ENCODE measurements at regions of chr6 and their contacts with region 1.

Region 1: DNA sequence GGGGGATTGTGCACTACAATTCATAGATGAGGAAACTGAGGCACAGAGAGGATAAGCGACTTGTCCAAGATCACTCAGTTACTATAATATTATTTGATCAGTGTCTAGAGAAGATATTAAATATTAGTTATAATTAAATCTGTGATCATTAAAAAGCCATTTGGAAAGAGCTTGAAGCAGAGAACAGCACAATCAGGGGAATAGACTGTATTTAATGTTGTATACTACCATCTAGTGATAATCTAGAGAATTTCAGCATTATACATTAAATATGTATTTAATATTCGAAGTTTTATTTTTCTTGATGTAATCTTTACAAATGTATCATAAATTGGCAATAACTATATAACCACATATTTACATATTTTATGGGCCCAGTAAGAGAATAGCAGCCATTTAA is 20.1 kb upstream of the MTCL3 start:
- DNase-seq: peak in 1 of 35 experiments; percentile 32
- ATAC-seq: peak in 1 of 4 experiments; percentile 62
- H3K4me3 ChIP-seq: no peak overlapping the region
- H3K4me3 Mint-ChIP-seq: no peak overlapping the region
- H3K27ac ChIP-seq: no peak overlapping the region
- H3K27ac Mint-ChIP-seq: no peak overlapping the region
- H3K4me1 ChIP-seq: no peaks in the 10 kb centered on the region
- H3K4me1 Mint-ChIP-seq: no peaks in the 10 kb centered on the region
- H3K27me3 ChIP-seq: no peaks in the 10 kb centered on the region
- H3K27me3 Mint-ChIP-seq: peaks cover 6 to 15% of the 10 kb centered on the region in 2 donors

Region 2: DNA sequence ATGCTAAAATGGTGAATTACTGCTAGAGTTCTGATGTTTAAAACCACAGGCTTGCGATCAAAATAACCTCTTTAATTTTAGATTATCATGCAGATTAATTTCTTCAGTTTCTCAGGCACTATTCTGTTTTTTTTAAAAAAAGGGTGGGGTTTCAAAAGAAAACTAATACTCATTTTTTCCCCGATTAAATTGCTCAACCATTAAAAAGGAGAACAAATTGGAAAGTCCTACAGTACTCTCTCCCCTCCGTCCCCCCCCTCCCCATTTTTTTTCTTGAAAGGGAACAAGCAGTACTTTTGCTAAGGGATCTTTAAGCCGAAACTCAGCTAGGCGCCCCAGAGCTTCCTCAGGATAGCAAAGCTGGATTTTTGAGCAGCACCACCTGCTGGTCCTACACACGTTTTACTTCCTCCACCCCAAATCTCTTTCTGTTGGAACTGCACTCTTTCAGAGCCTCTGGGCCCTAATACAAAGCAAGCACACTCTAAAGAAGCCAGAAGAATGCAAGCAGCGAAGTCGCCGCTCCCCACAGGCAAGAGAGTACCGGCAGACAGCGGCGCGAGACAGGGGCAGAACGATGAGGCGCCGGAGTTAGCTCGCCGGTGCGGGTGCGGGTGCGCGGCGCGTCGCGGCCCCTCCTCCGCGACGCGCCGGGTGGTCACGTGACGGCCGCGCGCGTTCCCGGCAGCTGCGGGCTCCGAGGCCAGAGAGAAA is 272.9 kb before region 1 on chr6 and contains the start of gene RNF146:
- CTCF ChIA-PET with region 1: no interaction called
- POLR2A ChIA-PET with region 1: interaction called in 1 of 2 experiments, 11 read pairs
- DNase-seq: peak; percentile 41 to 81 (median 63)
- ATAC-seq: peak; percentile 83 to 86 (median 84)
- H3K4me3 ChIP-seq: peak within 1 kb of the TSS; percentile 95 to 96
- H3K4me3 Mint-ChIP-seq: peak within 1 kb of the TSS; percentile 92 to 100 (median 93)
- H3K27ac ChIP-seq: peak within 1 kb of the TSS; percentile 97
- H3K27ac Mint-ChIP-seq: peak within 1 kb of the TSS; percentile 99 to 100
- H3K4me1 ChIP-seq: peaks cover 0 to 16% of the 10 kb centered on the region in 2 experiments
- H3K4me1 Mint-ChIP-seq: peaks cover 33 to 50% (median 41%) of the 10 kb centered on the region in 3 donors
- H3K27me3 ChIP-seq: no peaks in the 10 kb centered on the region
- H3K27me3 Mint-ChIP-seq: no peaks in the 10 kb centered on the region
- total RNA-seq, gene RNF146: 15.6 to 32.2 (median 31.3) TPM

Region 3: DNA sequence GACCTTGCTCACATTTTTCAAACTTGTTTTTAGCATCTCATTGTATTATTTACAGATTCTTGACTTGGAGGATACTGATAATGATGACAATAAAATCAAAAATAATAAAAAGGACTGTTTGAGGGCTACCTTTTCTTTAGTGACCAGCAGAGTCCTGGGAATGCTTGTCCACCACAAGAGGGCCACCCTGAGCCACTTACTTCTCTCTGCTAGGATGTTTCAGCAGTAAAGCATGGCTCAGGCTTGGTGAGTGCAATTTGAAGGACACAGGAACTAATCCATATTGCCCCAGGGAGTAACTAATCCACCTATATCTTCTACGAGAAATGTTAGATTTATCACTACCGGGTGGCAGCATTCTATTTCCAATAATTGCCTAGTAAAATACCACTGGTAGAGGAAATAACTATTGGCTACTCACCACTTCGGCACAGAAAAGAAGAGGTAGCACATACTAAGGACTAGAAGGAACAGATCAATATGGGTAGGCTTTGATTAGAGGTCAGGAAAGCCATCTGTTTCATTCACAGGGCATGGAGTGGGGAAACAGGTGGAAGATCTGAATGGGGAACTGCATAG is 74.3 kb before region 1 on chr6:
- CTCF ChIA-PET with region 1: interaction called, 12 to 17 read pairs
- POLR2A ChIA-PET with region 1: interaction called in 1 of 2 experiments, 3 read pairs
- DNase-seq: peak in 32 of 35 experiments; percentile 3 to 73 (median 40)
- ATAC-seq: peak; percentile 46 to 67 (median 58)
- H3K4me3 ChIP-seq: no peak overlapping the region
- H3K4me3 Mint-ChIP-seq: no peak overlapping the region
- H3K27ac ChIP-seq: no peak overlapping the region
- H3K27ac Mint-ChIP-seq: no peak overlapping the region
- H3K4me1 ChIP-seq: peaks cover 0 to 5% of the 10 kb centered on the region in 2 experiments
- H3K4me1 Mint-ChIP-seq: peaks cover 0 to 4% (median 0%) of the 10 kb centered on the region in 3 donors
- H3K27me3 ChIP-seq: no peaks in the 10 kb centered on the region
- H3K27me3 Mint-ChIP-seq: no peaks in the 10 kb centered on the region

Region 4: GRCh38 chr6:127618729-127619128 is 79.5 kb after region 1 on chr6:
- CTCF ChIA-PET with region 1: no interaction called
- POLR2A ChIA-PET with region 1: no interaction called
- DNase-seq: no peak
- ATAC-seq: no peak
- H3K4me3 ChIP-seq: no peak overlapping the region
- H3K4me3 Mint-ChIP-seq: no peak overlapping the region
- H3K27ac ChIP-seq: no peak overlapping the region
- H3K27ac Mint-ChIP-seq: no peak overlapping the region
- H3K4me1 ChIP-seq: no peaks in the 10 kb centered on the region
- H3K4me1 Mint-ChIP-seq: no peaks in the 10 kb centered on the region
- H3K27me3 ChIP-seq: no peaks in the 10 kb centered on the region
- H3K27me3 Mint-ChIP-seq: no peaks in the 10 kb centered on the region

Region 5: DNA sequence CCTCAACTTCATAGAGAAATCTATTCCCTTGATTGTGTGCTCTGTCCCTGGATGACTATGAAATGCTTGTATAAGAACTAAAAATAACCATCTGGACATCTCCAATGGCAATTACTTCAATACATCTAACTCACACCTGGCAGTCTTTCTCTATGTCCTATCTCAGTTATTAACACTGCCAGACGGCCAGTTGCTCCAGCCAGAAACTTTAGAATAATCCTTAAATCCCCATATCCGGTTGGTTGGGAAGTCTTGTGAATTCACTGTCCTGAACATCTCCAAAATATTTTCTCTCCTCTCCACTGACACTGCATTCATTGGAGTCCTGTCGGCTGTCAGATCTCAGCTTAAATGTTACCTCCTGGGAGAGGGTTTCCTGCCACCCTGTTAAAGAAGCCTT is 1331.5 kb after region 1 on chr6:
- CTCF ChIA-PET with region 1: interaction called in 1 of 2 experiments, 11 read pairs
- POLR2A ChIA-PET with region 1: no interaction called
- DNase-seq: no peak
- ATAC-seq: no peak
- H3K4me3 ChIP-seq: no peak overlapping the region
- H3K4me3 Mint-ChIP-seq: no peak overlapping the region
- H3K27ac ChIP-seq: no peak overlapping the region
- H3K27ac Mint-ChIP-seq: no peak overlapping the region
- H3K4me1 ChIP-seq: no peaks in the 10 kb centered on the region
- H3K4me1 Mint-ChIP-seq: no peaks in the 10 kb centered on the region
- H3K27me3 ChIP-seq: no peaks in the 10 kb centered on the region
- H3K27me3 Mint-ChIP-seq: peaks cover 3 to 7% of the 10 kb centered on the region in 2 donors